Activated CD4-positive, alpha-beta memory T cell treated with anti-CD3 and anti-CD28 coated beads for 36 hours (primary cell): ENCODE measurements at regions of chr17 and their contacts with region 1.

Region 1: DNA sequence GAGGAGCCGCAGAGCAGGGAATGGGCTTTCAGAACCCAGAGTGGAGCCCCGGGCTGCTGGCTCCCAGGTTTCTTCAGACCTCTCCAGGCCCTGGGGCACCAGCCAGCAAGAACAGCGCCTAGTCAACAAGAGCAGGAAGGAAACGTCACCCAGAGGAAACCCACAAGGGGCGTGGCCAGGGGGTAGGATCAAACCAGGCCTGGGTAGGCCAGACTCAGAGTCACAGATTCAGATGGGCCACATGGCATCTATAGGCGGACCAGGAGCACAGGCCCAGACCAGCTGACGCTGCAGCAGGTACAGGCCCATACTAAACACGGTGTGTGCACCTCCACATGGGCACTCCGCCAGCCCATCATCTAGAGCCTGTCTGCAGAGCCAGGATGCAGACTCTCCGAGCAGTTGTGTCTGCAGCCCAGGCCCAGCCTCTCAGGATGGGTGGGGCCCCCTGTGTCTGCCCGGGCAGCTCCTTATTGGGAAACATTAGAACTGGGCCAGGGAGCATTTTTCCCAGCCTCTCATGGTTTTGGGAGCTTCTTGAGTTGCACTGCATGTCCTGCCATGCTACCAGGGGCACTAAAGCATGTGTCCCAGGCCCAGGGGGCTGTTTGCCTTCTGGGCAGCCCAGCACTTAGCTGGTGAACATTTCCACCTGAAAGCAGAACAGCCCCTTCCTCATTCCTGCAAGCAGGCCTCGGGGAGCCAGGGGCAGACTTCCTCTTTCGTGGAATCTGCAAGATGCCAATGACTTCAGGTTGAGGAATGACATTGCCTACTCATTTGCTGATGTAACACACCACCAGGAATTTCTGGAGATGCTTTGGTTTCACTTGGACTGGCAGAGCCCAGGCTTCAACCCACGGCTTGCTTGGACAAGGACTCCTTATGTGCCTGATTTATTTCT is at the start of gene NLRP1:
- DNase-seq: peak; percentile 98
- H3K4me3 Mint-ChIP-seq: peak within 1 kb of the TSS; percentile 96
- H3K27ac Mint-ChIP-seq: peak within 1 kb of the TSS; percentile 96
- H3K4me1 Mint-ChIP-seq: peaks cover 65% of the 10 kb centered on the region
- H3K27me3 Mint-ChIP-seq: no peaks in the 10 kb centered on the region
- total RNA-seq, gene NLRP1: 39.9 to 45.0 TPM

Region 2: GRCh38 chr17:5644065-5644464 is 59.4 kb after region 1 on chr17:
- CTCF ChIA-PET with region 1: no interaction called
- POLR2A ChIA-PET with region 1: no interaction called
- intact Hi-C with region 1: no loop called
- DNase-seq: no peak
- H3K4me3 Mint-ChIP-seq: no peak overlapping the region
- H3K27ac Mint-ChIP-seq: no peak overlapping the region
- H3K4me1 Mint-ChIP-seq: no peaks in the 10 kb centered on the region
- H3K27me3 Mint-ChIP-seq: peaks cover 2% of the 10 kb centered on the region

Region 3: GRCh38 chr17:5706577-5707216 is 122.1 kb after region 1 on chr17:
- CTCF ChIA-PET with region 1: interaction called, 54 read pairs
- POLR2A ChIA-PET with region 1: no interaction called
- intact Hi-C with region 1: loop called (anchors 1 kb)
- DNase-seq: peak; percentile 72
- H3K4me3 Mint-ChIP-seq: no peak overlapping the region
- H3K27ac Mint-ChIP-seq: no peak overlapping the region
- H3K4me1 Mint-ChIP-seq: no peaks in the 10 kb centered on the region
- H3K27me3 Mint-ChIP-seq: peaks cover 15% of the 10 kb centered on the region

Region 4: DNA sequence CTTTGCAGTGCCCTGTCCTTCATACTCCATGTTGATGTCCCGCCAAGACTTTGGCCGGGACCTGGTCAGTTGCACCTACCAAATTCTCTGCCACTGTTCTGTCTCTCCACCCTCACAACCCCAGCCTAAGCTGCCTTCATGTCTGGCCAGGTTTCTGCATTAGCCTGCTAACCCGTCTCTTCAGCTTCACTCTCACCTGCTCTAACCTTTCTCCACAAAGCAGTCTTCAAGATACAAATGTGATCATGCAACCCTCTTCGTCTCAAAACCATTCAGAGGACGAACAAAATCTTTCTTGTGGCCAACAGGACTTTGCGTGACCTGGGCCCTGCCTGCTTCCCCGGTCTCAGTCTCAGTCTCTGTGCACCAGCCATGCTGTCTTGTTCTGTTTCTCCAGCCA is 633.7 kb after region 1 on chr17:
- CTCF ChIA-PET with region 1: no interaction called
- POLR2A ChIA-PET with region 1: no interaction called
- intact Hi-C with region 1: loop called (anchors 1 kb)
- DNase-seq: no peak
- H3K4me3 Mint-ChIP-seq: no peak overlapping the region
- H3K27ac Mint-ChIP-seq: no peak overlapping the region
- H3K4me1 Mint-ChIP-seq: peaks cover 5% of the 10 kb centered on the region
- H3K27me3 Mint-ChIP-seq: peaks cover 47% of the 10 kb centered on the region

Region 5: DNA sequence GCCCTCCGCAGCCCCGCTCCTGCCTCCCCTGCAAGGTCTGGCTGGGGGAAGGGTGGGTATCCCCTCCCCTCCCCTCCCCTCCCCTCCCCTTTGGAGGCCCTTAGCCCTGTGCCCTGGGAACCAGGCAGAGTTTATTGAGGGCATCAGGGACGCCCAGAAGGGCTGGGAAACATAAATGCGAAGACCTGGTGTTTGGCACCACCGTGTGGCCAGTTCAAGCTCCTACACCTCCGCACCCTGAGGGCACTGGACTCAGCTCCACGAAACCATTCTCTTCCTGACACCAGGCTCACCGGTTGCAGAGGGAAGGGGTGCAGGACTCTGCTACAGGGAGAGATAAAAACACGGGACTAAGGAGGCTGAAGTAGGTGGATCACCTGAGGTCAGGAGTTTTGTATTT is 851.3 kb after region 1 on chr17:
- CTCF ChIA-PET with region 1: interaction called, 14 read pairs
- POLR2A ChIA-PET with region 1: no interaction called
- intact Hi-C with region 1: no loop called
- DNase-seq: peak; percentile 72
- H3K4me3 Mint-ChIP-seq: no peak overlapping the region
- H3K27ac Mint-ChIP-seq: no peak overlapping the region
- H3K4me1 Mint-ChIP-seq: peaks cover 2% of the 10 kb centered on the region
- H3K27me3 Mint-ChIP-seq: peaks cover 17% of the 10 kb centered on the region

Region 6: GRCh38 chr17:7014261-7014994 is 1429.8 kb after region 1 on chr17:
- CTCF ChIA-PET with region 1: no interaction called
- POLR2A ChIA-PET with region 1: no interaction called
- intact Hi-C with region 1: loop called (anchors 10 kb)
- DNase-seq: peak; percentile 99
- H3K4me3 Mint-ChIP-seq: peak overlapping the region; percentile 96
- H3K27ac Mint-ChIP-seq: peak overlapping the region; percentile 99
- H3K4me1 Mint-ChIP-seq: peaks cover 58% of the 10 kb centered on the region
- H3K27me3 Mint-ChIP-seq: no peaks in the 10 kb centered on the region